Activated CD4-positive, alpha-beta memory T cell treated with anti-CD3 and anti-CD28 coated beads for 36 hours (primary cell): ENCODE measurements at regions of chr10 and their contacts with region 1.

Region 1: GRCh38 chr10:90871766-90872647 is at the start of gene RPP30:
- DNase-seq: peak; percentile 91
- H3K4me3 Mint-ChIP-seq: peak within 1 kb of the TSS; percentile 93
- H3K27ac Mint-ChIP-seq: peak within 1 kb of the TSS; percentile 98
- H3K4me1 Mint-ChIP-seq: peaks cover 31% of the 10 kb centered on the region
- H3K27me3 Mint-ChIP-seq: peaks cover 24% of the 10 kb centered on the region
- total RNA-seq, gene RPP30: 103 to 108 TPM

Region 2: DNA sequence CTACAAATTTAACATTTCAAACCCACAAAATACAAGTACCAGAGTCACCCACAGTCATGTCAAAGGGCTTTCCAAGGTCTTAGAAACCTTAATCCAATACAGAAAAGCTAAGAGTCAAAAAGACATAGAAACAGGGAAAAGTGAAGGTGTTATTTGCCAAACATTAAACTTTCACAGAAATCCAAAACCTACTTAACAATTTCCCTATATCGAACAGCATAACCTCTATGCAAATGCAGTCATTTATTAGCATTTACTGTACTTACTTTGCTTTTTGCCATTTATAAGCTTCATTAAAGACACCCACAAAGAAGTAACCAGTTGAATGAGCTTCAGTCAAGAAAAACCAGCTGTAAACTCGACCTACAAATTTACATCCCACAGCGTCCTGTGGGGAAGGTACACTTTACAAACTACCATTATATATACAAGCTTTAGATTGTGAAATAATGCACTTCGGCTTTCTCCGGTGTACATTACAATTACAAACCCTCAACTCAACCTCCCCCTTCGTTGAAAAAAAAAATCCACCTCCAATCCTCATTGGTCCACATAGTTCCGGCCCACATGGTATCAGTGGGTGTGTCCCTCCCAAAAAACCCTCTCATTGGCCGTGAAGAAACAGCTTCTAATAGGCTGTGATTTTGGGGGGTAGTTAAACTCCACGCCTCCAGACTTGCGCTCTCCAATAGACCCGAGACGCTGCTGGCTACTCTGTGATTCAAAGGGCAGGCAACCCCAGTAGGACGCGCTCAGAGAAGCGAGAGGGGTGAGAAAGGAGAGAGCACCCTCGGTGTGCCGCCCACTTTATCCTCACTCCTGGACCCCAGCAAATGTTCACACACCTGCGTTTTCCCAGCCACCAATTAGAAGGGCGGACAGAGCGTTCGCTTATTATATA is 1228.3 kb before region 1 on chr10:
- CTCF ChIA-PET with region 1: no interaction called
- POLR2A ChIA-PET with region 1: no interaction called
- intact Hi-C with region 1: loop called (anchors 5 kb)
- DNase-seq: peak; percentile 81
- H3K4me3 Mint-ChIP-seq: no peak overlapping the region
- H3K27ac Mint-ChIP-seq: no peak overlapping the region
- H3K4me1 Mint-ChIP-seq: peaks cover 7% of the 10 kb centered on the region
- H3K27me3 Mint-ChIP-seq: no peaks in the 10 kb centered on the region

Region 3: GRCh38 chr10:89861584-89862301 is 1010.3 kb before region 1 on chr10:
- CTCF ChIA-PET with region 1: no interaction called
- POLR2A ChIA-PET with region 1: no interaction called
- intact Hi-C with region 1: loop called (anchors 2 kb)
- DNase-seq: peak; percentile 62
- H3K4me3 Mint-ChIP-seq: no peak overlapping the region
- H3K27ac Mint-ChIP-seq: peak overlapping the region; percentile 81
- H3K4me1 Mint-ChIP-seq: peaks cover 27% of the 10 kb centered on the region
- H3K27me3 Mint-ChIP-seq: no peaks in the 10 kb centered on the region

Region 4: DNA sequence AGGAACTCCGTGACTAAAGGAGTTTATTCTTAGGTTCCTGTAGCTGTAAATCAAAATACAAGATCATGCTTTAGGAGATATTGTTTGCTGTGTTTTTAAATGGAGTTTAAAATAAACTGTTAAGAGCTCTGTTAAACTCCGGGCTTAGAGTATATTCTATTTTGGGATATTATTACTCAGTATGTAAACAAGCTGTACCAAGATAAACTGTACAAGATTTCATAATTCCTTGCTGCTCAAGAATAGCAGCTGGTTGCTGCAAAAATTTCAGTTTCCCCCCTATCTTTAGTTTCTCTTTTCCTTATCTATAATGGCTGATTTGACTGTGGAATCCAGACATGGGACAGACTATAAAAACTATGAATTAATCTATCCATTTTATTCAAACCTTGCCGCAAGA is 229.9 kb before region 1 on chr10:
- CTCF ChIA-PET with region 1: no interaction called
- POLR2A ChIA-PET with region 1: no interaction called
- intact Hi-C with region 1: no loop called
- DNase-seq: no peak
- H3K4me3 Mint-ChIP-seq: no peak overlapping the region
- H3K27ac Mint-ChIP-seq: no peak overlapping the region
- H3K4me1 Mint-ChIP-seq: no peaks in the 10 kb centered on the region
- H3K27me3 Mint-ChIP-seq: no peaks in the 10 kb centered on the region

Region 5: DNA sequence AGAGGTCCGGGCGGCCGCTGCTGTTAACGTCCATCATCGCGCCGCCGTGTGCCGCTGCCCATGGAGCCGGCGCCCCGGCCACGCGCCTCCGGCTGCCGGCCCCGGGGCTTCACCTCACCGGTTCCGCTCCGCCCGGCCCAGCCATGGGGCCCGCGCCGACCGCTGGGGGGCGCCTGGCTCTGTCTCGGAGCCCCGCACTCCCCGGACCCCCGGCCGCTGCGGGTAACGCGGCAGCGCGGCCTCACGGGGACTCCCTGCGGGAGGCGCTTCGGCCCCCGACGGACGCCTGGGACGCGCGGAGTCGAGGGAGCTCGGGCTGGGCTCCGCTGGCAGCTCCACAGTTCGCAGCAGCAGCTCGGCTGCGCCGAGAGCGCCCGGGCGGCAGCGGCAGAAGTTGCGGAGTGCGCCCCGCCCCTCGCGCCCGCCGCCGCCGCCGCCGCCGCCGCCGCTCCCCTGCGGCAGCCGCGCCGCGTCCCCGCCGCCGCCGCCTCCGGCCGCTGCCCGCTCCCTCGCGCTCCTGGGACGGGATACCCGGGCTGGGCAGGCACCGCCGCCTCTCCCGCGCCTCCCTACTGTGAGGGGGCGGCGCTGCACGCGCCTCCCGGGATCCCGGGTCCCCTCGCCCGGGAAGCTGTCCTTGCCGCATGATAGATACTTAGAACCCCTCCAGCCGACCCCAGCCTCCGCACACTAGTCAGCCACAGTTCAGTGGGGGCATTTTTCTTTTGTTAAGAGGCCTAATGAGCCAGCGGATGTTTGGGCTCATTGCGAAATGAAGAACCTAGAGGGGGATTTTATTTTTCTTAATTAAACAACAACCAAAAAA is 14.2 kb before region 1 on chr10 and contains the start of gene HTR7:
- CTCF ChIA-PET with region 1: interaction called, 23 read pairs
- POLR2A ChIA-PET with region 1: interaction called, 10 read pairs
- intact Hi-C with region 1: loop called (anchors 1 kb)
- DNase-seq: peak; percentile 64
- H3K4me3 Mint-ChIP-seq: peak within 1 kb of the TSS; percentile 77
- H3K27ac Mint-ChIP-seq: no peak within 1 kb of the TSS
- H3K4me1 Mint-ChIP-seq: peaks cover 14% of the 10 kb centered on the region
- H3K27me3 Mint-ChIP-seq: peaks cover 37% of the 10 kb centered on the region
- total RNA-seq, gene HTR7: not detected

Region 6: GRCh38 chr10:91201213-91201996 is 329.4 kb after region 1 on chr10:
- CTCF ChIA-PET with region 1: no interaction called
- POLR2A ChIA-PET with region 1: interaction called, 3 read pairs
- intact Hi-C with region 1: loop called (anchors 2 kb)
- DNase-seq: peak; percentile 80
- H3K4me3 Mint-ChIP-seq: peak overlapping the region; percentile 49
- H3K27ac Mint-ChIP-seq: peak overlapping the region; percentile 86
- H3K4me1 Mint-ChIP-seq: peaks cover 87% of the 10 kb centered on the region
- H3K27me3 Mint-ChIP-seq: no peaks in the 10 kb centered on the region